BJ (cell line): ENCODE measurements at regions of chr6 and their contacts with region 1.

Region 1: DNA sequence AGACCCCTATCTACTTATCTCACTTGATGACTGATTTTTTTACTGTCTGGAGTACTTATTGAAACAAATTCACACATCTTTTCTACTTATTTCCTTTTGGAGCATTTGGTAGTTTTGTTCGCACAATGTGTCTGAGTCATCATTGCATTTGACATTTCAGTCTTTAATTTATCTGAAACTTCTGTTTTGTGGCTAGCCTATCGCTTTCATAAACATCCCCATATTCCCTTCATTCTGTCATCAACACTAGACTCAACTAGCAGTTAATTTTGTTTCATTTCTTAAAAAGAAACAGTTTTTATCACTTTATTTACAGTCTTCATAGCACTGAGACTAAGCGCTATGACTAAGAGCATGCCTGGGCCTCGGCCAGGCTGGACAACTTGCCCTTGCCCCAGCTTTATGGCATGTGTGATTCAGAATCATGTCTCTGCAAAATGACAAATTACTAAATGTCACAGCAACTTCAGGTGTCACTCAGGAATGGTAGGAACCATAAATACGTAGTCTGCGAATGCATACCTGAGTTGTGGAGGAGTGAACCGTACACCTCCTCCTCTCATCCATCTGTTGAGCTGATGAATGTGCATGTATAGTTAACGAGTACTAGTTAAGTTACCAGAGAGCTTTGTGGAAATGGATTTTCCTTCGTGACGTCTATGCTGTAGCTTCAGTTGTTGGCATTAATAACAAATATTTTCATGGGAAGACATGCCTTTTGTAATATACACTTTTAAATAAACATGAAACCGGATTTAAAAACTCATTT is 16.2 kb downstream of the L3MBTL3 start:
- DNase-seq: peak; percentile 31
- H3K4me3 ChIP-seq: no peak overlapping the region
- H3K27me3 ChIP-seq: no peaks in the 10 kb centered on the region
- CTCF ChIP-seq: no peak

Region 2: GRCh38 chr6:130020907-130021629 is 13.5 kb before region 1 on chr6:
- CTCF ChIA-PET with region 1: interaction called, 12 read pairs
- POLR2A ChIA-PET with region 1: no interaction called
- DNase-seq: peak; percentile 66
- H3K4me3 ChIP-seq: peak overlapping the region; percentile 90
- H3K27me3 ChIP-seq: no peaks in the 10 kb centered on the region
- CTCF ChIP-seq: peak; percentile 79

Region 3: DNA sequence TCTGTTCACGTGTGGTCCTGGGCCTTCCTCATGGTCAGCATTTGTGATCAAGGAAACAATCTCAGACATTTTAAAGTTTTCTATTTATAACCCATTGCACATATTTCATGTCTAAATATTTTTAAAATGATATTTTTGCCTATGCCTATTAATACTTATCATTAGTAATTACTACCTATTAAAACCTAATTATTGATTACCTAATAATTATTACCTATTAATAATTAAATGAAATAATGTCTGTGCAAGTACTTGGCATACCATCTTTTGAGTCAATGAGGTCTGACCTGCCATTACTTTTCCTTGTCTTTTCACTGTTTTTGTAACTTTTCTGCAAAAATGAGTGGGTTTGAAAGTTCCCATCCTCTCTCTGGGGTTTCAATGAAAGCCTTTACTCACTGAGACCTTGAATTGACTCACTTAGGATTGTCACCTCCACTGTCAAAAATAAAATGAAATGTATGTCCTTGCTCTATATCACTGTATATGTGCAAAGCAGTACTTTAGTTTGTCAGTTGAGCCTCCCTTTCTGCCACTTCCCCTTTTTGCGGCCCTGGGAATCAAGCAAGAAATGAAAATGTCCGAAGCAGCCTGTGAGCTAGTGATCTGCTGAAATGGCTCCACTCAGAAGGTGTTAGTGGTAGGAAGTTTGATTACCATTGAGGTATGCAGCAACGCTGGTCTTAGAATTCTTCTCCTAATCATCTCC is 71.6 kb after region 1 on chr6:
- CTCF ChIA-PET with region 1: no interaction called
- POLR2A ChIA-PET with region 1: no interaction called
- DNase-seq: no peak
- H3K4me3 ChIP-seq: no peak overlapping the region
- H3K27me3 ChIP-seq: no peaks in the 10 kb centered on the region
- CTCF ChIP-seq: no peak